ENCODE measurements at regions of chr1 and their contacts with region 1.

Region 1: DNA sequence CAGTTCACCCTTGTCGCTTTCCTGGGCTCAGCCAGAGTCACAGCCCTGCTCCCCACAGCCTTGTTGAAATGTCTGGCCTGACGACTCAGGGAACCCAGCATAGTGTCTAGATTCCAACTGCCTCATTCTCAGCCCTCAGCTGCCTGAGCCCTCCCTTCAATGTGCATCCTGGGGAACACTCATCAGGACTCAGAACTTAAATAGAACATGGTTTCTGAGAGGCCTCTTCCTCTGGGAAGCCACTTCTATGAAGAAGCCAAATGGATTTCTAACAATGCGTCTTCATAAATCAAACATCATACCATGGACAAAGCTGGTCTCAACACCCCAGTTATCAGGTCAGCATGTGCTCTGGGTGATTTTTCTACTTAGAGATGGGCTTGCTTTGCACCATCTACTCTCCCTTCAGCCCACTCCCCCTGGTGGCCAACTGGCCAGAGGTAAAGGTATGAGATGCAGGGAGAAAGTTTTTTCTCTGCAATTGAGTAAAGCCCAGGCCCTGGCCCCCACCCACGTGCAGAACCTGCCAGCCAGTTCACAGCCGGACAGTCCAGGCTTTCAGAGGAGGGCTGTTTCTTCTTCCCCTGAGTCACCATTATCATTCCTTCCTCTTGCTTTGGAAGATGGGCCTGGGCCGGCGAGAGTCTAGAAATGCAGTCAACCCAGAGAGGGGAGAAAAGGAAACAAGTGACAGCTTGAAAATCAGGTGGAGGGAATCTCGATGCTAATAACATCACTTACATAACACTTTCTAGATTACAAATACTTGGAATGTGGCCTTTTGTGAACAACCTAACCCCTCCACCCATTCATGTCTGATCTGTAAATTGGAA is 32.1 kb downstream of the CD244 start:
- DNase-seq: peak; percentile 32 to 81 (median 45)
- ATAC-seq: peak in 2 of 4 donors; percentile 42 to 64
- H3K4me3 ChIP-seq: no peak overlapping the region
- H3K27ac ChIP-seq: no peak overlapping the region
- H3K4me1 ChIP-seq: no peaks in the 10 kb centered on the region
- H3K27me3 ChIP-seq: peaks cover 0 to 12% (median 0%) of the 10 kb centered on the region in 9 donors
- CTCF ChIP-seq: peak; percentile 27 to 56 (median 44)
- POLR2A ChIP-seq: no peak

Region 2: GRCh38 chr1:160519642-160520435 is 310.7 kb before region 1 on chr1:
- intact Hi-C with region 1: no loop called
- DNase-seq: no peak
- ATAC-seq: no peak
- H3K4me3 ChIP-seq: peak overlapping the region in 1 of 12 donors; percentile 54
- H3K27ac ChIP-seq: peak overlapping the region in 1 of 12 donors; percentile 79
- H3K4me1 ChIP-seq: peaks cover 0 to 11% (median 0%) of the 10 kb centered on the region in 12 donors
- H3K27me3 ChIP-seq: no peaks in the 10 kb centered on the region
- CTCF ChIP-seq: no peak
- POLR2A ChIP-seq: no peak

Region 3: GRCh38 chr1:160675641-160676410 is 154.7 kb before region 1 on chr1:
- intact Hi-C with region 1: loop called in 5 of 10 experiments (anchors 5 to 10 kb)
- DNase-seq: peak; percentile 57 to 83 (median 72)
- ATAC-seq: peak; percentile 69 to 85 (median 82)
- H3K4me3 ChIP-seq: no peak overlapping the region
- H3K27ac ChIP-seq: no peak overlapping the region
- H3K4me1 ChIP-seq: peaks cover 0 to 46% (median 0%) of the 10 kb centered on the region in 12 donors
- H3K27me3 ChIP-seq: peaks cover 0 to 15% (median 0%) of the 10 kb centered on the region in 9 donors
- CTCF ChIP-seq: peak; percentile 57 to 82 (median 76)
- POLR2A ChIP-seq: no peak

Region 4: GRCh38 chr1:160681067-160681890 is 149.3 kb before region 1 on chr1:
- intact Hi-C with region 1: loop called in 5 of 10 experiments (anchors 5 to 10 kb)
- DNase-seq: peak; percentile 43 to 84 (median 61)
- ATAC-seq: peak in 3 of 4 donors; percentile 68 to 80 (median 68)
- H3K4me3 ChIP-seq: no peak overlapping the region
- H3K27ac ChIP-seq: peak overlapping the region in 1 of 12 donors; percentile 10
- H3K4me1 ChIP-seq: peaks cover 0 to 49% (median 0%) of the 10 kb centered on the region in 12 donors
- H3K27me3 ChIP-seq: peaks cover 0 to 11% (median 6%) of the 10 kb centered on the region in 9 donors
- CTCF ChIP-seq: peak in 11 of 12 donors; percentile 25 to 76 (median 45)
- POLR2A ChIP-seq: no peak

Region 5: DNA sequence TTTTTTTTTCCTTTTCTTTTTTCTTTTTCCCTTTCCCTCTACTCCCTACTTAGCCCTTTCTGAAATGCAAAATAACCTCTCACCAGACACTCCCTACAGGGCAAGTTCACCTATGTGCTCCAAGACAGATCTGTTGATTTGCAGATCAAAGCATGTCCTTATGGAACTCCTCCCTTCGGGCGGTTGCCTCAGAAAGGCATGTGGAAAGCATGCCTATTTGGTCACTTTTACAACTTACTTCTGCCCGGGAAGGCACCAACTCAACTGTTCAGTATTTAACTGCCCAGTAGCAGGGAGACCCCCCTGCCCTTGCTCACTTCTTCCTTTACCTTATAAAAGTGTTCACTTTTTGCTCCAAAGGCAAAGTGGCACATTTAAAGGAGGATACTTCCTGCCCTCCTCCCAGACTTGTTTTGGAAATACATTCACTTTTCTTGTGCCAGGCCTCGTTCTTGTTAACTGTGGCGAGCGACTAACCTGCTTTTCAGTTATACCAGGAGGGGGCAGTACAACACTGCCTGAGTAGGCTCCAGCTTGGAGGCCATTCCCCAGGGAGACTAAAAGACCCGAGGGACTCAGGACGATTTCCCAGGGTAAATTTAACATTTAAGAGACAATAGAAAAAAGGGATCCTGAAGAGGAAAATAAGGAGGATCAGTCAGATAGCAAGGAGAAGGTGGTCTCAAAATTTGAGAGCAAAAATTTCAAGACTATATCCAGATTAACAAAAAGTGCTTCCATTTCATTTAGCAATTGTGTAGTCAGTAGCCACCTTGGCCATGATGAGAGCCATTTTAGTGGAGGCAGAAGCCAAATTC is 103.8 kb before region 1 on chr1:
- intact Hi-C with region 1: loop called in 4 of 10 experiments (anchors 2 to 10 kb)
- DNase-seq: peak in 4 of 5 donors; percentile 34 to 56 (median 47)
- ATAC-seq: peak; percentile 67 to 81 (median 72)
- H3K4me3 ChIP-seq: no peak overlapping the region
- H3K27ac ChIP-seq: peak overlapping the region in 1 of 12 donors; percentile 43
- H3K4me1 ChIP-seq: peaks cover 0 to 30% (median 0%) of the 10 kb centered on the region in 12 donors
- H3K27me3 ChIP-seq: peaks cover 0 to 6% (median 0%) of the 10 kb centered on the region in 9 donors
- CTCF ChIP-seq: peak; percentile 56 to 84 (median 69)
- POLR2A ChIP-seq: no peak

Region 6: DNA sequence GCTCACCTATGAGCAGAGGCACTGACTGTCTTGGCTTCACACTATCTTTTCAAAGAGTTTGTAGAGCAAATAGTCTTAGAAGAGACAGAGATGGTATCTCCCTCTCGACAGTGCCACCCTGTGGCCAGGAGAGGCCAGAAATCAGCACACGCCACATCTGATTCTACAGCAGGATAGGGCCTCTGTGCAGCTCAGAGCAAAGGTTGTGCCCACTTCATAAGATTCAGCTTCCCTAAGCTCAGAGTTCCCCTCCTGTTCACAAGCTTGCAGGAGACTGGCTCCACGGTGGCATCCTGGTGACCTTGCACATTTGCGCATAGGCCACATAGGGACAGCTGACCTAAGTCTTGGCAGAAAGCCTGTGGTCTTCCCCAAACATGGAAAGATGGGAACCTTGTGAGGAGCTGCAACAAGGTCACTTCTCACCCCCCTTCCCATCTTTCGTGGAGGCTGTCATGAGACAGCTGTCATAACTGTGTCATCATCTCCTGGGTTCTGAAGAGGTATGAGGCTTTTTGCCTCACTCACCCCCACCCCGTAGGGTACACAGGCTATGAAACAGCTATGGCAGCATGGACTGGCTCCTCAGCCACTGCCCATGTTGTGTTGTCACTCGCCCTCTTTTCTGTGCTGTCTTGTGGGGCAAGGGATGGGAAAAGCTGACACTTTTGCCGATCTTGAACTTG is 121.0 kb after region 1 on chr1:
- intact Hi-C with region 1: loop called (anchors 1 to 5 kb)
- DNase-seq: peak in 3 of 5 donors; percentile 17 to 51 (median 41)
- ATAC-seq: peak; percentile 55 to 77 (median 69)
- H3K4me3 ChIP-seq: no peak overlapping the region
- H3K27ac ChIP-seq: no peak overlapping the region
- H3K4me1 ChIP-seq: peaks cover 0 to 26% (median 0%) of the 10 kb centered on the region in 12 donors
- H3K27me3 ChIP-seq: peaks cover 0 to 18% (median 0%) of the 10 kb centered on the region in 9 donors
- CTCF ChIP-seq: peak; percentile 40 to 74 (median 58)
- POLR2A ChIP-seq: no peak

Region 7: GRCh38 chr1:160981584-160982411 is 151.3 kb after region 1 on chr1:
- intact Hi-C with region 1: loop called in 1 of 10 experiments (anchors 10 kb)
- DNase-seq: peak in 1 of 5 donors; percentile 30
- ATAC-seq: peak in 3 of 4 donors; percentile 16 to 56 (median 45)
- H3K4me3 ChIP-seq: peak overlapping the region in 9 of 12 donors; percentile 5 to 35 (median 29)
- H3K27ac ChIP-seq: no peak overlapping the region
- H3K4me1 ChIP-seq: peaks cover 0 to 12% (median 0%) of the 10 kb centered on the region in 12 donors
- H3K27me3 ChIP-seq: peaks cover 5 to 47% (median 16%) of the 10 kb centered on the region in 9 donors
- CTCF ChIP-seq: no peak
- POLR2A ChIP-seq: no peak

Region 8: GRCh38 chr1:161098210-161099068 is 267.9 kb after region 1 on chr1 and contains the start of gene KLHDC9:
- intact Hi-C with region 1: loop called in 5 of 10 experiments (anchors 2 to 10 kb)
- DNase-seq: peak; percentile 79 to 88 (median 82)
- ATAC-seq: peak; percentile 80 to 90 (median 84)
- H3K4me3 ChIP-seq: peak within 1 kb of the TSS; percentile 49 to 81 (median 64)
- H3K27ac ChIP-seq: peak within 1 kb of the TSS in 11 of 12 donors; percentile 40 to 83 (median 71)
- H3K4me1 ChIP-seq: peaks cover 2 to 35% (median 17%) of the 10 kb centered on the region in 12 donors
- H3K27me3 ChIP-seq: no peaks in the 10 kb centered on the region
- CTCF ChIP-seq: peak in 1 of 12 donors; percentile 15
- POLR2A ChIP-seq: no peak
- total RNA-seq, gene KLHDC9: 2.4 to 13.3 (median 6.1) TPM